HCT116 (cell line): ENCODE measurements at regions of chr7 and their contacts with region 1.

Region 1: GRCh38 chr7:142338633-142339501 is 81.0 kb upstream of the PRSS58 start:
- DNase-seq: peak; percentile 48
- ATAC-seq: peak; percentile 99
- H3K4me3 ChIP-seq: no peak overlapping the region
- H3K27ac ChIP-seq: no peak overlapping the region
- H3K4me1 ChIP-seq: 0 out of 4 replicates have a peak, but pooled peaks cover 0 to 3% of the 10 kb centered on the region in 2 experiments
- H3K27me3 ChIP-seq: no peaks in the 10 kb centered on the region
- CTCF ChIP-seq: peak; percentile 72 to 79 (median 77)
- POLR2A ChIP-seq: no peak
- RAD21 ChIP-seq: peak; percentile 82

Region 2: GRCh38 chr7:141820067-141820466 is 518.8 kb before region 1 on chr7:
- CTCF ChIA-PET with region 1: no interaction called
- POLR2A ChIA-PET with region 1: no interaction called
- RAD21 ChIA-PET with region 1: no interaction called
- intact Hi-C with region 1: no loop called
- DNase-seq: no peak
- ATAC-seq: no peak
- H3K4me3 ChIP-seq: no peak overlapping the region
- H3K27ac ChIP-seq: no peak overlapping the region
- H3K4me1 ChIP-seq: no peaks in the 10 kb centered on the region
- H3K27me3 ChIP-seq: no peaks in the 10 kb centered on the region
- CTCF ChIP-seq: no peak
- POLR2A ChIP-seq: no peak
- RAD21 ChIP-seq: no peak

Region 3: DNA sequence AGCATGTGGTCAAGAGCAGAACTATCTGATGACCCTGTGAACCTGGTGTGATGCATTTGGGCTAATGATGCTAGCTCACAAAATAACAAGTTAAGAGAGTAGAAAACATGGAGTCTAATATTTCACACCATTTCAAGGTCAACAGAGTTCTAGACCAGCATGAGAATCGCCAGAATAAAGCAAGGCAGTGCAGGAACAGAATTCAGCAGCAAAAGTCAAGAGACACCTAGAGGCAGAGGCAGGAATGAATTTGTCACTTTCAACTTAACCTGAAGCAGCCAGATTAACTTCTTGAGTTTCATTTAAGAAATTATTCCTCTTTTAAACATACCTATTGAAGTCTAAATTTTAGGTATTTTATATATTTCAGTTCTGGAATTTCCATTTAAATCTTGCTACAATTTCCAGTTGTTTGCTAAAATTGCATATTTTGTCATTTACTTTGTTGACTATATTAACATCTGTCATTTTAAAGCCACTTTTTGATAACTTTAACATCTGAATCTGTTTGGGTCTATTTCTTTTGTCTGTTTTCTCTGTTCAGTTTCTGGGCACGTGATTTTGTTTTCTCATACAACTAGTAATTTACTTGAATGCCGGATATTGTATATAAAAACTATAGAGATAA is 36.8 kb before region 1 on chr7:
- CTCF ChIA-PET with region 1: interaction called, 11 read pairs
- POLR2A ChIA-PET with region 1: interaction called, 3 read pairs
- RAD21 ChIA-PET with region 1: no interaction called
- intact Hi-C with region 1: no loop called
- DNase-seq: peak; percentile 22
- ATAC-seq: peak; percentile 43
- H3K4me3 ChIP-seq: no peak overlapping the region
- H3K27ac ChIP-seq: no peak overlapping the region
- H3K4me1 ChIP-seq: no peaks in the 10 kb centered on the region
- H3K27me3 ChIP-seq: no peaks in the 10 kb centered on the region
- CTCF ChIP-seq: peak; percentile 62 to 68 (median 64)
- POLR2A ChIP-seq: no peak
- RAD21 ChIP-seq: peak; percentile 43

Region 4: DNA sequence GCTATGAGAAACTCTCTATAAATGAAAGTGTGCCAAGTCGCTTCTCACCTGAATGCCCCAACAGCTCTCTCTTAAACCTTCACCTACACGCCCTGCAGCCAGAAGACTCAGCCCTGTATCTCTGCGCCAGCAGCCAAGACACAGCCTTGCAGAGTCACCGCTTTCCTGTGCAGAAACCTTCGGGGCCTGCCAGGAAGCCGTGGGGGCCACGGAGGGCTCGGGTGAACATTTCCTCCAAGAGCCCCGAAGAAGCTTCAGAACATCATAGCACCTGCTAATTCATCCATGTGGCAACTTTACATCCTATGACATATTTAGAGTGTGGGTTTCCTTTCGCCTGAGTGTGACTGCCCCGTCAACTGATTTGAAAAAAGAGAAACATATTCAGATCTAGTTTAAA is 25.3 kb before region 1 on chr7:
- CTCF ChIA-PET with region 1: no interaction called
- POLR2A ChIA-PET with region 1: no interaction called
- RAD21 ChIA-PET with region 1: no interaction called
- intact Hi-C with region 1: loop called (anchors 1 kb)
- DNase-seq: no peak
- ATAC-seq: no peak
- H3K4me3 ChIP-seq: no peak overlapping the region
- H3K27ac ChIP-seq: no peak overlapping the region
- H3K4me1 ChIP-seq: no peaks in the 10 kb centered on the region
- H3K27me3 ChIP-seq: peaks cover 12% of the 10 kb centered on the region; the same call in 1 of the 2 replicates
- CTCF ChIP-seq: no peak
- POLR2A ChIP-seq: no peak
- RAD21 ChIP-seq: no peak

Region 5: GRCh38 chr7:142323706-142324105 is 15.2 kb before region 1 on chr7:
- CTCF ChIA-PET with region 1: interaction called, 22 read pairs
- POLR2A ChIA-PET with region 1: no interaction called
- RAD21 ChIA-PET with region 1: no interaction called
- intact Hi-C with region 1: no loop called
- DNase-seq: peak; percentile 36
- ATAC-seq: peak; percentile 91
- H3K4me3 ChIP-seq: no peak overlapping the region
- H3K27ac ChIP-seq: no peak overlapping the region
- H3K4me1 ChIP-seq: peaks cover 0 to 11% of the 10 kb centered on the region in 2 experiments; a peak in 1 of 4 replicates
- H3K27me3 ChIP-seq: no peaks in the 10 kb centered on the region
- CTCF ChIP-seq: peak; percentile 62 to 82 (median 79)
- POLR2A ChIP-seq: no peak
- RAD21 ChIP-seq: peak; percentile 58

Region 6: DNA sequence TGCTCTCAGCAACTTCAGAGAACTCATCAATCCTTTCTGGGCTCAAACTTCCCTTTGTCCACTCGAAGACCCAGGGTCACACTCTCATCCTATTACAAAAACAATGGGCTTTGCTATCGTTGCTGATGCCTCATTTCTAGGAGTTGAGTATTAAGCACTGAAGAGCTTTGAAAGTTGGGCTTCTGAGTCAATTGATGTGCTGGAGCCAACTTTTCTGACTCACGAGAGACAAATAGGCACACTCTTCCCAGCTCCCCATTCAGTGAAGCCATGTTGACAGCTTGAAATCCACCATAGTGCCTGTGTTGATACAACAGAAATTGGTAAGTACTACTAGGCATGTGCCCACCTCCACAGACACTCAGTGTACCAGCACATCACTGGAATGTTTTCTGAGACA is 16.5 kb after region 1 on chr7:
- CTCF ChIA-PET with region 1: interaction called, 6 read pairs
- POLR2A ChIA-PET with region 1: no interaction called
- RAD21 ChIA-PET with region 1: no interaction called
- intact Hi-C with region 1: loop called (anchors 1 kb)
- DNase-seq: no peak
- ATAC-seq: no peak
- H3K4me3 ChIP-seq: no peak overlapping the region
- H3K27ac ChIP-seq: no peak overlapping the region
- H3K4me1 ChIP-seq: peaks cover 2 to 4% of the 10 kb centered on the region in 2 experiments; a peak in 3 of 4 replicates
- H3K27me3 ChIP-seq: no peaks in the 10 kb centered on the region
- CTCF ChIP-seq: no peak
- POLR2A ChIP-seq: no peak
- RAD21 ChIP-seq: no peak